ENCODE measurements at regions of chr12 and their contacts with region 1.

Region 1: DNA sequence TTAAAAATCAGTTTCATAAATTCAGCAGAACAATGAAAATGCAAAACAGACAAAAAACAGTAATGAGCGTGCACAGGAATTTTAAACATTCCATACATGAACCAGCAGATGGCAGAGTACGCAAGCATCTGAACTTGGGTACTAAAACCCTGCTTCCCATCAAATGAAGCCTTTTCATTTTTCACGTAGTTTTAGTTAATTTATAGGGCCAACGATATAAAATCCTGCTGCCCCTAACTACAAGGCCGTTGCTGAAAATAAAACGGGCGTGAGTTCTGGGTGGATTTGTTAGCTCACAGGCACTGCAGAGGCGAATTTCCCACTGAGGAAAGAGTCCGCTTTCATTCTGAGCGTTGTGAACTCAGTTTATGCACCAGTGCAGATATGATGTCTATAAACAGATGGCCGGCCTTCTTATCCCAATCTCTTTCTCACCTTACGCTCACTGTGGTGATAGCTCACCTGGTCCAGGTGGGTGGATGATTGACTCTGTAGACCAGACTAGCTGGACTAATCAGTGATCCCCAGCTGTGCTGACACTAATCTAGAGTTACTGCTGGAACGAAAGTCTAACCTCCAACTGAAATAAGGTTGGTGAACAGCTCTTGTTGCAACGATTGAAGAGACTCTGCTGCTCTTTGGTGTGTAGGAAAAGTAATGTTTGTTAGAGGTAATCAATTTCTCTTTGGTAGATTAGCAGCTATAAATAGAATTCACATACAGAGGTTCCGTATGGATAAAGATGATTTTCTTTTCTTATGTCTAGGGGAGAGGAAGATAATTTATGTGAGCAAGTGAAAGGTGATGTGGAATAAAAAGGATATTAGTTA is 89.2 kb downstream of the PDZRN4 start:
- DNase-seq: no peak
- H3K4me3 ChIP-seq: no peak overlapping the region
- H3K27ac ChIP-seq: no peak overlapping the region
- H3K4me1 ChIP-seq: peaks cover 0 to 8% (median 2%) of the 10 kb centered on the region in 6 donors
- H3K27me3 ChIP-seq: no peaks in the 10 kb centered on the region
- CTCF ChIP-seq: peak in 10 of 11 experiments; percentile 12 to 72 (median 56)
- POLR2A ChIP-seq: no peak

Region 2: DNA sequence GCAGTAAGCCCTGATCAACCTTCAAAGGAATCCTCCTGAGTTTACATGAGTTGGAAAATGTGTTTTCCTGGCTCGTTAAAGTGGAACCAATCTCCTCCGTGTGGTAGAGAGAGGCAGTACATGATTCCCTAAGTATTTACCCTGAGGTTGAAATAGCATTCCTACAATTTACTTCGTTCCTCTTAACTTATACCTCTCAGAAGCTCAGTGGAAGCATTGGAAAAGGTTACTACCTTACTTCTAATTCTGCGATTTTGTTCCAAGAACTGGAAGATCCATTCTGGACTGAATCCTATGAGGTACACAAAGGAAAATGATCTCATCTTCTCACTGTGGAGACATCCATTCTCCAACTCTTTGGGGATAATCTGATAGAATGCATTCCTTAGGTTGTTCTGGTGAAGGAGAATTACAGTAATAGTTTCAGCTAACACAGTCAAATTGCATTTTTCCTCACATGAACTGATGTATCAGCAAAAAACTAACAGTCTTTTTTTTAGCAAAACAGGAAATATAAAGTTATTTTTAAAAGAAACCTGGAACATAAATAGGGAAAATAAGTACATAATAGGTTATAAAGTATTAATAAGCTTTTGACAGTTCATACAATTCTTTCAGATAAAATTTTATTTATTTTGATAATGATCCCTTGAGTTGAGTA is 386.4 kb after region 1 on chr12:
- intact Hi-C with region 1: loop called (anchors 10 kb)
- DNase-seq: no peak
- H3K4me3 ChIP-seq: no peak overlapping the region
- H3K27ac ChIP-seq: no peak overlapping the region
- H3K4me1 ChIP-seq: no peaks in the 10 kb centered on the region
- H3K27me3 ChIP-seq: no peaks in the 10 kb centered on the region
- CTCF ChIP-seq: peak in 6 of 11 experiments; percentile 28 to 44 (median 42)
- POLR2A ChIP-seq: no peak

Measured in spleen (tissue), 13 donors.